Tibial artery (tissue), 4 donors: ENCODE measurements at regions of chr1 and their contacts with region 1.

Region 1: GRCh38 chr1:95233737-95234500 is at the start of gene RWDD3:
- DNase-seq: peak; percentile 94 to 97
- H3K4me3 ChIP-seq: peak within 1 kb of the TSS; percentile 73 to 94
- H3K27ac ChIP-seq: peak within 1 kb of the TSS; percentile 87 to 94
- H3K4me1 ChIP-seq: peaks cover 0 to 50% (median 25%) of the 10 kb centered on the region in 4 donors
- H3K27me3 ChIP-seq: no peaks in the 10 kb centered on the region
- CTCF ChIP-seq: peak; percentile 88 to 91

Region 2: DNA sequence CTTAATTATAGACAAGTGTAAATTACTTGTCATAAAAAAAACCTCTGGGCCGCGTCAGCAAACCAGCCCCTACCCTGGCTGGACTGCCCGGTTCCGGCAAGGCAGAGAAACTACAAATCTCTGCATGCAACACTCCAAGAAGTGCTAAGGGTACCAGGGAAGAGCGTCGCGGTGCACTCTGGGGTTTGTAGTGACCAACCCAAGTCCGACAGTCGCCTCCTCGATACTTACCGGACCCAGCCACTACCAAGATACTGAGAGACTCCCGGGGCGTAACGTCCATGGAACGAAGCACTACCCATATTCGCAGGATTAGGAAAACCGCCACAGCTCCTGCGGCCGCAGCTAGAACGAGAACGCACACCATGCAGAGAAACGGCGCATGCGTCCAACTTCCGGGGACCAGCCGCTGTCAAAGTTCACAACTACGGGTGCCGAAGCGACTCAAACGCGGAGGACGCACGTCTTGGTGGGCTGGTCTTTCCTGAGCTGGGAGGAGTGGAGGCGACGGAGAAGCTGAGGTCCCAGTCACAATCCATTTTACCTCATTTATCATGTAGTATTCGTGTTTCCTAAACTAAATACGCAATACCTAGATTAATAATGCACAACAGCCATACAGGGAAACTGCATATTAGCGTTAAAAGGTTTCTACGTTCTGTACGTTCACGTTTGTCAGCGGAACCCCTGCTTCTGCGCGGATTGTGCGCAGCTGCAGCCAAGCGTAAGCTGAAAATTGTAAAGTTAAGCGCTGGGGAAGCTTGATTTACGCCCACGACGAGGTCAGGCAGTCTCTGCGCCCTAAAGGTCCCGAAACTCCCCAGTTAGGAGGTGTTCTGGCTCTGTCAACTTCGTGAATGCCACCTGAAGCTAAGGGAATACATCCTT is 161.1 kb before region 1 on chr1 and contains the start of gene ALG14:
- intact Hi-C with region 1: loop called (anchors 10 kb)
- DNase-seq: peak; percentile 93 to 97
- H3K4me3 ChIP-seq: peak within 1 kb of the TSS; percentile 60 to 70
- H3K27ac ChIP-seq: peak within 1 kb of the TSS; percentile 86 to 88
- H3K4me1 ChIP-seq: peaks cover 0 to 8% (median 0%) of the 10 kb centered on the region in 4 donors
- H3K27me3 ChIP-seq: no peaks in the 10 kb centered on the region
- CTCF ChIP-seq: no peak

Region 3: DNA sequence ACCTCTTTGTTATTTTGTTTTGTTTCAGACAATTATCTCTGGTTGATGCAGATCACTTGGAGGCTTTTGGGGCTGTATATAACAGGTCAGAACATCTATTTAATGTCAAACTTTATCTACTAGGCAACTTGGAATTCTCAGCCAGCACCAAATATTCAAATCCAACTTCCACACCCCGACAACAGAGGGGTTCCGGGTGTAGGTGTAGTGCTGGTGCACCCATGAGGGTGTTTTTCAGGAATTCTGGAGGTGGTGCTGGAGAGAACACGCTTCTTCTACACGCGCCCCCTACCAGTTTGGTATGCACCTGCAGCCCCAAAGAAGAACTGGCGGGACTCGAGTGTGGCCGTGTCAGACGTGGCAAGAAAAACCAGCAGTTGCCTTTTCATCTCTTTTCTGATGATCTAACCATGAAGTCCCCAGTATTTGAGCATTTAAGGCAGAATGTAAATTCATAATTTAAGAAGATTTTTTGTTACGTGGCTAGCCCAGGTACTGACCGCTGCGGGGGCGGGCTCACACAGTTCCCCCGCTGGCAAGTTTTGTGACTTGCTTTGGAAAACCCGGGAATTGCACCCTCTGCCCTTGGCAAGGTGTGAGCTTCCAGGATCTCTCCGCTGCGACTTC is 117.2 kb before region 1 on chr1:
- intact Hi-C with region 1: loop called (anchors 5 kb)
- DNase-seq: peak; percentile 35 to 68
- H3K4me3 ChIP-seq: peak overlapping the region; percentile 87
- H3K27ac ChIP-seq: peak overlapping the region; percentile 76 to 81
- H3K4me1 ChIP-seq: peaks cover 0 to 20% (median 7%) of the 10 kb centered on the region in 4 donors
- H3K27me3 ChIP-seq: no peaks in the 10 kb centered on the region
- CTCF ChIP-seq: peak; percentile 63